ENCODE measurements at regions of chr5 and their contacts with region 1.

Region 1: GRCh38 chr5:102782311-102782770 is 27.2 kb downstream of the PAM start:
- DNase-seq: no peak
- H3K4me3 ChIP-seq: no peak overlapping the region
- H3K27ac ChIP-seq: no peak overlapping the region
- H3K4me1 ChIP-seq: peaks cover 5% of the 10 kb centered on the region; the same call in 1 of the 2 replicates
- H3K27me3 ChIP-seq: no peaks in the 10 kb centered on the region
- CTCF ChIP-seq: no peak

Region 2: DNA sequence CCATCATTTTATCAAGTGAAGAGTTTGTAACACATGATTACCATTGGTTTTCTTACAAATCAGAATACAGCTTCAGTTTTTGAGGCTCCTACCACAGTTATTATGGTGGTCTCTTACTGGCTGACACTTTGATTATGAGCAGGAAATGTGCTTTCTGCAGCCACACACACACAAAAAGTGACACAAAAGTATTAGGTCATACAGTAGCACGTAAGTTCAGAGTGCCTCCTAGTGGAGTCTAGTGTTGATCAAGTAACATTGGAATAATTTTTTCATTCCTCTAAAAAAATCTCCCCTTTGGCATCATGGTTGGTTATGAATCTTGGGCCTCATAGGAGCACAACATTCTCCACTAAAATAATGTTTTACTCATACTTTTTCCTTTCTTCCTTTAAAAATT is 10.4 kb after region 1 on chr5:
- CTCF ChIA-PET with region 1: no interaction called
- POLR2A ChIA-PET with region 1: no interaction called
- intact Hi-C with region 1: no loop called
- DNase-seq: no peak
- H3K4me3 ChIP-seq: no peak overlapping the region
- H3K27ac ChIP-seq: no peak overlapping the region
- H3K4me1 ChIP-seq: no peaks in the 10 kb centered on the region
- H3K27me3 ChIP-seq: no peaks in the 10 kb centered on the region
- CTCF ChIP-seq: no peak; the same call in 1 of the 2 replicates

Region 3: GRCh38 chr5:102971697-102972293 is 189.5 kb after region 1 on chr5:
- CTCF ChIA-PET with region 1: no interaction called
- POLR2A ChIA-PET with region 1: no interaction called
- intact Hi-C with region 1: loop called (anchors 10 kb)
- DNase-seq: no peak
- H3K4me3 ChIP-seq: no peak overlapping the region
- H3K27ac ChIP-seq: no peak overlapping the region
- H3K4me1 ChIP-seq: no peaks in the 10 kb centered on the region
- H3K27me3 ChIP-seq: no peaks in the 10 kb centered on the region
- CTCF ChIP-seq: peak; percentile 43